MCF 10A (cell line): ENCODE measurements at regions of chr12 and their contacts with region 1.

Region 1: DNA sequence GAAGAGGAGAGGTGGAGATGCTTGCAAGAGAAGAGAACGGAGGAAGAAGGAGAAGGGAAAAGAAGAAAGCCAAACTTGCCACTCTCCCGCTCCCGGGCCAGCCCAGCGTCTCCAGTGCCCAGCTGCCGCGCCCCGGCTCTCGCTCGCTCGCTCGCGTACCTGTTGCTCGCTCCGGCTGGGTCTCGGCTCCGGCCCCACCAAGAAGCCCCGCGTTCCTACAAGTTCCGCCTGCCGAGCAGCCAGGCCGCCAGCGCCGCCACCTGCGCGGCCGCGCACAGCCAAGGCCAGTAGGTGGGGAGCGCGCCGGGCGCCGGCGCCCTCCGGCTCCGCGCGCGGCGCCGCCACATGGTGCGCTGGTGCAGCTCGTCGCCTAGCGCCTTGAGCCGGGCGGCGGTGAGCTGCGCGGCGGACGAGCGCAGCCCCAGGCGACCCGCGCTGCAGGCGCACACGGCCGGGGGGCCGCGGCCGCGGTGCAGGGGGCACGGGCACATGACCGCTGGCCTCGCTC is 370 bp downstream of the HRK start:
- DNase-seq: peak; percentile 54
- H3K4me3 Mint-ChIP-seq: peak overlapping the region; percentile 80
- H3K27ac Mint-ChIP-seq: no peak overlapping the region
- H3K4me1 Mint-ChIP-seq: peaks cover 19% of the 10 kb centered on the region
- H3K27me3 Mint-ChIP-seq: peaks cover 25% of the 10 kb centered on the region
- CTCF ChIP-seq: no peak

Region 2: DNA sequence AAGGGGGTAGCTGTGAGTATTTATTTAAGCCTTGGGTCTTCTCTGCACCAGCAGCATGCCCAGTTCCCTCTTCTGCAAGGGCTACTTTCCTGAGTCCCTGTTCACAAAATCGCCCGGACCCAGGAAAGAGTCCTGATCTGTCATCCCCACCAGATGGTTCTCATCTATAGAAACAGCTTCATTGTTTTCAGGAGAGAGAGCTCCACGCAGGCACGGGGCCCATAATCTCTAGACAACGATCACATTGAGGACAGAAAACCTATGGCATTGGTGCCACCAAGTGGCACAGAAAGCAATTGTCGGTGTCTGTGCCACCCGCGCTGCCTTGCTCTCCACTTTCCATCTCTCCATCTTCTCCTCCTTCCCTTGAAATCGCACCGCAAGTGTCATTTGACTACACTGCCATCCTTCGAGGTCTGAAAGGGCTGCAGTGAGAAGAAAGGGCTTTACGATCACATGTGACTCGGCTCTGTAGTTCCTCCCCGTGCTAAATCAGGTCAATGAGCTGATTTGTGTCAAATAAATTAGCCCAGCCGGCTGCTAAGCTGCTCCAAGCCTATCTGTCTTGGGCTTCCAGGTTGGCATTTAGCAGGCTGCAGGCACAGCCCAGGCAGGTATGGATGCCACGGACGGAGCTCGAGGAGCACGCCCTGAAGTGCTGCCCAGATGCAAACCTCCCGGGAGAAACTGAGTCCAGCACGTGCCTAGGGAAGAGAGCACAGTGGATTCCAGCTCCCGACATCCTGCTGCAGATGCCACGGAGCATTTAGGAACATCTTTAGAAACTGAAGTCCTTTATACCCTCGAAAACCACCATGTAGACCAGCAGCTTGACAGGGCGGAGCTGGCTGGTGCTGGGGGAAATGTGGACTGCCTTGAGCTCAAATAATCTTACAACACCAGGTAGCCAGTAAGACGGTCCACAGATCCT is 171.8 kb before region 1 on chr12:
- CTCF ChIA-PET with region 1: interaction called, 14 read pairs
- POLR2A ChIA-PET with region 1: interaction called, 7 read pairs
- intact Hi-C with region 1: no loop called
- DNase-seq: peak; percentile 61
- H3K4me3 Mint-ChIP-seq: no peak overlapping the region
- H3K27ac Mint-ChIP-seq: no peak overlapping the region
- H3K4me1 Mint-ChIP-seq: peaks cover 9% of the 10 kb centered on the region
- H3K27me3 Mint-ChIP-seq: no peaks in the 10 kb centered on the region
- CTCF ChIP-seq: peak; percentile 71

Region 3: DNA sequence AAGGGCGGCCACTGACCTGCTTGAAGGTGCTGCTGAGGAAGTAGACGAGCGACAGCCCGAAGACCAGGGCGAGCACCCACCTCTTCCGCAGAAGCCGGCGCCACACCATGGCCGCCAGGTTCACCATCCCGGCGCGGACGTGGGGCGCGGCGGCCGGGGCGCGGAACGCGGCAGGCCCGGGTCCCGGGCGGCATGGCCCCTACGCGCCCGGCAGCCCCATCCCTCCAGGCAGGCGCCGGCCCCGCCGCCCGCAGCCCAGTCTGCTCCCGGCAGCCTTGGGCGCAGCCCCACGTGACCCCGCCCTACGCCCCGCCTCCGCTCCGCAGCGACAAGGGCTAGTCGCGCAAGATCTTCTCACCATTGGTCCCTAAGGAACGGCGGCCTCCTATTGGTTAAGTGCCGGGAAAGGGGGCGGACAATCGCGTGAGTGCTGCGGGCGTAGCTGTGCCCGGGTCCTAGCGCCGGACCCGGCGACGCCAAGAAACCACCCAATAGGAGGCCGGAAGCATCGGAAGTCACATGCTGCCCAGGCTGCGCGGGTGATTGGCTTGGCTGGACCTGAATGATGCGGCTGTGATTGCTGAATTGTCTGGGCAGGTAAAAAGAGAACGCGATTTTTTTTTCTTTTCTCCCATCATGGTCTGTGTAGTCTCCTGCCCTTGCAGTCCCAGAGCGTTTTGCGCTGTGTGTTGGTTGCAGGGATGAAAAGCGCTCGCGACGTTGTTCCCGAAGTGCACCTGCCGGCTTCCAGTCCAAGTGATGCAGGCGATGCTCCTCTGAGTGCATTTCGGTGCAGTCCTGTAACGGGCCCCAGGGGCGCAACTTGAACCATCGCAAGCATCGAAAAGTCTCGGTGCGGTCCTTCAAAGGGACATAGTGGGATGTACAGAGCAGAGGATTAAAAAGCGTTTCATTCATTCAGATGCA is 142.8 kb before region 1 on chr12 and contains the starts of genes RNFT2 and SPRING1:
- CTCF ChIA-PET with region 1: interaction called, 4 read pairs
- POLR2A ChIA-PET with region 1: interaction called, 6 read pairs
- intact Hi-C with region 1: loop called (anchors 10 kb)
- DNase-seq: peak; percentile 99
- H3K4me3 Mint-ChIP-seq: peak within 1 kb of the TSS; percentile 92
- H3K27ac Mint-ChIP-seq: peak within 1 kb of the TSS; percentile 61
- H3K4me1 Mint-ChIP-seq: peaks cover 13% of the 10 kb centered on the region
- H3K27me3 Mint-ChIP-seq: no peaks in the 10 kb centered on the region
- CTCF ChIP-seq: no peak
- total RNA-seq, gene RNFT2: 7.2 and 10.5 TPM in 2 replicates
- total RNA-seq, gene SPRING1: 26.2 and 37.1 TPM in 2 replicates

Region 4: DNA sequence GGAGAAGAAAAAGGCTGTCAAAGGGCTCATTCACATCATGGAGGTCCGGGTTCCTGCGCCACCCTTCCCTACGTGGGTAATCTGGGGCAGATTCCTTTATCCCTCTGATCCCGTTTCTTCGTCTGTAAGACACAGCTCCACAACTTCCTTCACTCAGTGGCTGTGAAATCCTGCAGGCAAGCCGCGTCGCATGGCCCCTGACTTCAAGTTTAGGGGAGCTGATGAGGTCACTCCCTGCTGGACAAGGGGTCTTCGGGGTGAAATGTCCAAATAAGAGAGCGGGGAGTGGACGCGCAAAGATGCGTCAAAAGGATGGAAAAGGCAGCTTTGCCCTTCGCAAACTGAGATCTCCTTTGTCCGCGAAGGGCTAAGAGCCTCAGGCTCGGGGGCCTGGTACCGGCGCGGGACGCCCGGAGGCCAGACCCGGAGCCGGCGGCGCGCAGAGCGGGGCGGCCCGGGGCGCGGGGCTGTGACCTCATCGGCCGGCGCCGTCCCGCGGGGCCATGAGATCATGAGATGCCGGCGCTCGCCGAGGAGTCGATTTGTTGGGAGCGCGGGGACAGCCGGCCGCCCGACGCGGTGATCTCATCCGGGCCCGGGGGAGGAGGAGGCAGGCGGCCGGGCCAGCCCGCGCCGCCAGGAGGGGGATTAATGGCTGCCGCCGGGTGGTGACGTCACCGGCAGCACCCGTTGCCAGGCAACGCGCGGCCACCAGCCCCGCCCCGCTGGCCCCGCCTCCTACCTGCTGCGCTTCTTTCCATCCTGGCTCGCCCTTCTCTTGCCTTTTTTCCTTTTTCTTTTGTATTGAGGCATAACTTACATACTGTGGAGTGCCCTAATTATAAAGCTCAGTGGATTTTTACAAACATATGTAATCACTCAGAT is 61.7 kb before region 1 on chr12:
- CTCF ChIA-PET with region 1: interaction called, 9 read pairs
- POLR2A ChIA-PET with region 1: interaction called, 6 read pairs
- intact Hi-C with region 1: loop called (anchors 5 kb)
- DNase-seq: peak; percentile 89
- H3K4me3 Mint-ChIP-seq: peak overlapping the region; percentile 81
- H3K27ac Mint-ChIP-seq: peak overlapping the region; percentile 96
- H3K4me1 Mint-ChIP-seq: peaks cover 7% of the 10 kb centered on the region
- H3K27me3 Mint-ChIP-seq: no peaks in the 10 kb centered on the region
- CTCF ChIP-seq: no peak

Region 5: DNA sequence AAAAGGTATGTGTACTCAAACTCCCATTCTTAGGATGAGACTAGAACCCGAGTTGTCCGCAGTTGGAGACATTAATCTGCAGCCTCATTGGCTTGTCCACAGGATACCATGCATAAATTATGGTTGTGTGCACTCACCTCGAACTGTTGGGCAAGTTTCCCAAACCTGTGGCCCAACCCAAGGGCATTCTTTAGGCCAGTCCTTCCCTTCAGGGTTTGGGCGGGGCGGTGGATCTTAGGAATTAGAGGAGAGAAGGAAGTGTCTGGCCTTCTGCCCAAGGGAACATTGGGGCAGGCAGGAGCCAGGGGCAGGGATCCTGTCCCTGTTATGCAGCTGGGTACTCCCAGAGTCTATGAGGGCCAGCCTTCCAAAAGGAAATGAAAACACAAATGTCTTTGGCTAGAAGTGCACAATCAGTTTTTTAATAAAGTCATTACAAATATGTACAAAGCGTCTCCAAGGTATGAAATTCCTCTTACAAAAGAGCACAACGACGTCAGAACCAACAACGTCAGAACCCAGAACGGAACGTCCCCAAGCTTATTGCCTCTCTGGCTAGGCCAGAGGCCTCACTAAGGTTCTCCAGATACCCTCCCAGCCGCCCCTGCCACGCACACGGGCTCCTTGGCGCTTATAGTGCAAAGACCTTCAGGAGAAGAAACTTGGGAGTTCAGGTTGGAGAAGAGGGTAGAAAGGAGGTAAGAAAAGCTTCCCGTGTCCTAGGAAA is 25.0 kb before region 1 on chr12:
- CTCF ChIA-PET with region 1: interaction called, 9 read pairs
- POLR2A ChIA-PET with region 1: interaction called, 18 read pairs
- intact Hi-C with region 1: no loop called
- DNase-seq: peak; percentile 86
- H3K4me3 Mint-ChIP-seq: peak overlapping the region; percentile 35
- H3K27ac Mint-ChIP-seq: peak overlapping the region; percentile 93
- H3K4me1 Mint-ChIP-seq: peaks cover 18% of the 10 kb centered on the region
- H3K27me3 Mint-ChIP-seq: no peaks in the 10 kb centered on the region
- CTCF ChIP-seq: no peak

Region 6: DNA sequence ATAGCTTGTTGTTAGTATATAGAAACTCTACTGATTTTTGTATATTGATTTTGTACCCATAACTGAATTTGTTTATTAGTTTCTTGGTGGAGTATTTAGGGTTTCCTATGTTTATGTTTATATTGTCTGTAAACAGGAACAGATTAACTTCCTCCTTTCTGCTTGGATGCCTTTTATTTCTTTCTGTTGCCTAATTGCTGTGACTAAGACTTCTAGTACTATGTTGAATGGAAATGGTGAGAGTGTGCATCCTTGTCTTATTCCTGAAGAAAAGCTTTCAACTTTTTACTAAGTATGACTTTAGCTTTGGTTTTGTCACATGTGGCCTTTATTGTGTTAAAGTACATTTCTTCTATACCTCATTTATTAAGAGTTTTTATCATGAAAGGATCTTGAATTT is 50.8 kb after region 1 on chr12:
- CTCF ChIA-PET with region 1: no interaction called
- POLR2A ChIA-PET with region 1: no interaction called
- intact Hi-C with region 1: no loop called
- DNase-seq: no peak
- H3K4me3 Mint-ChIP-seq: no peak overlapping the region
- H3K27ac Mint-ChIP-seq: no peak overlapping the region
- H3K4me1 Mint-ChIP-seq: no peaks in the 10 kb centered on the region
- H3K27me3 Mint-ChIP-seq: no peaks in the 10 kb centered on the region
- CTCF ChIP-seq: no peak

Region 7: DNA sequence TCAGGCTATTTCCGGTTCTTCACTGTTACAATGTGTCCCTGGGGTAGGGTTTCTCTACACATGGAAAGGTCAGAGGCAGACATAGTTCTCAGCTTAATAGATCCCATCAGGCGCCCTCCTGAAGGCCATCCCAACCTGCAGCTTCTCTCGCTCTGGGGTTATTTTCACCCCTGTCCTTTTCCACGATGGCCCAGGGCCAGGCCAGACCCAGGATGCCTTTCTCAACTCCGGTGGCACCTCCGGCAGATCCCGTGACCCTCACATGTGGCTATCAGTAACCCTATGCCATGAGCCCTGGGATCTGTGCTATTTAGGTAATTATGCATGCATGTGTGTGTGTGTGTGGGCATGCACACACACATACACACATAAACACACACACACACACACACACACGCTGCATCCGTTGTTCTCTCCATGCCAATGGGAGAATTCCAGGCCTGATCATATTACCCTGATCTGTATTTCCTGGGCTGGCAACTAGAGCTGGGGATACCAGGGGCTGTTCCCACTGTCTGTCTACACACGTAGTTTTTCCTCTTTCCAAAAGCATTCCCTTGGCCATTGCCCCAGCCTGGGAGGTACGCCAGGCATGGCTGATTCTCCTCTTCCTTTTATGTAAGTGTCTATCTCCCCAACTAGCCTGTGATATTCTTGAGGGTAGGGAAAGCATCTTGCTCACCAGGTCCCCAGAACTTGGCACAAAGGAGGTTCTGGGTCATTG is 531.8 kb after region 1 on chr12:
- CTCF ChIA-PET with region 1: no interaction called
- POLR2A ChIA-PET with region 1: no interaction called
- intact Hi-C with region 1: no loop called
- DNase-seq: no peak
- H3K4me3 Mint-ChIP-seq: no peak overlapping the region
- H3K27ac Mint-ChIP-seq: no peak overlapping the region
- H3K4me1 Mint-ChIP-seq: no peaks in the 10 kb centered on the region
- H3K27me3 Mint-ChIP-seq: no peaks in the 10 kb centered on the region
- CTCF ChIP-seq: no peak